ENCODE measurements at regions of chr1 and their contacts with region 1.

Region 1: GRCh38 chr1:3491291-3492246 is 37.1 kb downstream of the ARHGEF16 start:
- DNase-seq: peak; percentile 91

Region 2: GRCh38 chr1:3477241-3477995 is 14.2 kb before region 1 on chr1:
- CTCF ChIA-PET with region 1: interaction called, 10 read pairs
- POLR2A ChIA-PET with region 1: no interaction called
- DNase-seq: peak; percentile 50

Region 3: DNA sequence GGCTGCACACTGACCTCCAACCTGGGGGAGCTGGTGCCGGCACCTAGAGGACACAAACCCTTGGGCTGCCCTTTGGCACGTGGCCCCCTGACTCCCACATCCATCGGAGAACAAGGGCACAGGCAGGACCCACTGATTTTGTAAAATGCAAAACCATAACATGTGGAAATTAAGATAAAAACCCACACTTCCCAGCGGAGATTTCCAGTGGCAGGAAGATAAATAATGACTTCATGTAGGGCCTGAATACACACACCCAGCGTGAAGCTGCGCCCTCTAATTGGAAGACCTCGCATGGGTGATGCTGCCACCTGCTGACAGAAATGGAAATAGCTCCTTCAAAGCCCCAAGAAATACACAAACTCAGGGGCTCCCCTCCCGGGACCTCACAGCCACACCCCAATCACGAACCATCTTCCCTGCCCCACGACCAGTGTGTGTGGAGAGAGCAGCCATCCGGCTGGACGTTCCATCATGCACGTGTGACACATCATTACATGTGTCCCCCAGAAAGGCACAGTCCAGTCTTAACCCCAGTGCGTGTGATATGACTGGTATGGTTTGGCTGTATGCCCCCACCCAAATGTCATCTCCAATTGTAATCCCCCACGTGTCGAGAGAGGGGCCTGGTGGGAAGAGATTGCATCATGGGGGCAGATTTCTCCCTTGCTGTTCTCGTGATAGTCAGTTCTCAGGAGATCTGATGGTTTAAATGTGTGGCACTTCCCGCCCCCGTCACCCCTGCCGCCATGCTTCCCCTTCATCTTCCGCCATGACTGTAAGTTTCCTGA is 127.5 kb after region 1 on chr1:
- CTCF ChIA-PET with region 1: interaction called, 16 read pairs
- POLR2A ChIA-PET with region 1: interaction called, 4 read pairs
- DNase-seq: peak; percentile 65